ENCODE measurements at regions of chr21 and their contacts with region 1.

Region 1: DNA sequence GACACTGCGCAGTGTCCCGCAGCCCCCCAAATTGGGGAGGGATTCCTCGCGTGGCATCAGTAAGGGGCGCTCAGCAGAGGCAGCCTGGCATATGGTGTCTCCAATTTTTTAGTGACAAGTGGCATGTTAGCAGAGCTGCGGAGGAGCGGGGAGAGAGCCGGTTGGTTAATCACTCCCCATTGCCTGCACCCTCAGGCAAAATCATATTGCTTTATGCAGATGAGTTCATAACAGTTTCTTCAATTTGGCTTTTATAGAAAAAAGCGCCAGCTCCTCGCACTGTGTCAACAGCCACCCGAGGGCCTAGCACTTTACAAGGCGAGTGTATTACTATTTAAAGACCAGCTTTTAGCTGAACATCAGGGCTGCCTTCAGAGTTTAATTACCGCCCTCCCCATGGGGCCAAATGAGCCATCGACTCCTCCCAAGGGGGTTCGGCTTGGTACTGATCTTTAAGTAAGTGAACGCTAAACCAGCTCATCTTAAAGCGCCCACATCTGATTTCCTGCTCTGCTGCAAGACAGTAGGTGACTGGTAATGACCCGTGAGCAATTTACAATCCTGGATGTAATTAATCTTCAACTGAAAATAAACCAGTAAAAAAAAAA is 298.9 kb downstream of the DSCAM start:
- DNase-seq: no peak

Region 2: DNA sequence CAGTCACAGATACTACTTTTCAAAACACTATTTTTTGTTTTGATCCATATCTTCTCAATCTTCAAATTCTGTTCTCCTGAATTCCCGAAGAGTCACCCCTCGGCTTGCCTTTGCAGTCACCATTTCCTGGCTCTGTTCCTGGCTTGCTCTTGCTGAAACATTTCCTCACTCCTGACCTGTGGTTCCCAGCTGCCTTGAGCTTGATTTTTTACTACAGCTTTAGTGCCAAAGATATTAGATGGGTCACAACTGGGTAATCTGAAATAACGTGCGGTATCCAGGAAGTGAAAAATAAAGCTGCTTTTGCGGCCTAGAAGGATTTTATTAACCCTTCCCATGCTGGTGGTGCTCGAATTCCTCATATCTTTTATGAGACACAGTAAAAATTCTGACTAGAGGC is 362.0 kb before region 1 on chr21:
- intact Hi-C with region 1: no loop called
- DNase-seq: no peak

Region 3: GRCh38 chr21:40602080-40602479 is 54.1 kb after region 1 on chr21:
- intact Hi-C with region 1: loop called (anchors 10 kb)
- DNase-seq: peak in 1 of 10 donors; percentile 64

Measured in posterior cingulate gyrus (tissue), 11 donors.